Caco-2 (cell line): ENCODE measurements at regions of chr4 and their contacts with region 1.

Region 1: DNA sequence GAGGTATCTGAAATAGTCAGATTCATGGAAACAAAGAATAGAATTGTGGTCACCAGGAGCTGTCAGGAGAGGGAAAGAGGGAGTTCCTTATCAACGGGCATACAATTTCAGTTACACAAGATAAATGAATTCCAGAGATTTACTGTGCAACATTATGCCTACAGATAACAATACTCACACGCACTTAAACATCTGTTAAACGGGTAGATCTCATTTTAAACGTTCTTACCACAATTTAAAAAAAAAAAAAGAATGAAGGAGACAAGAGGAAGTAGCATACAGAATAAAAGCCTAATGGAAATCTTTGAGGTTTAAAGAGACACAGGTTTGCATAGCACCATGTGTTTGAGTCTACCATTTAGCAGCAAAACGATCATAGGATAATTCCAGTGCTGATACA is 298.0 kb downstream of the DKK2 start:
- DNase-seq: no peak
- H3K4me3 ChIP-seq: no peak overlapping the region
- H3K4me3 Mint-ChIP-seq: no peak overlapping the region
- H3K27ac Mint-ChIP-seq: no peak overlapping the region
- H3K4me1 ChIP-seq: peaks cover 24% of the 10 kb centered on the region
- H3K4me1 Mint-ChIP-seq: peaks cover 7% of the 10 kb centered on the region
- H3K27me3 ChIP-seq: no peaks in the 10 kb centered on the region
- H3K27me3 Mint-ChIP-seq: no peaks in the 10 kb centered on the region
- CTCF ChIP-seq: no peak

Region 2: DNA sequence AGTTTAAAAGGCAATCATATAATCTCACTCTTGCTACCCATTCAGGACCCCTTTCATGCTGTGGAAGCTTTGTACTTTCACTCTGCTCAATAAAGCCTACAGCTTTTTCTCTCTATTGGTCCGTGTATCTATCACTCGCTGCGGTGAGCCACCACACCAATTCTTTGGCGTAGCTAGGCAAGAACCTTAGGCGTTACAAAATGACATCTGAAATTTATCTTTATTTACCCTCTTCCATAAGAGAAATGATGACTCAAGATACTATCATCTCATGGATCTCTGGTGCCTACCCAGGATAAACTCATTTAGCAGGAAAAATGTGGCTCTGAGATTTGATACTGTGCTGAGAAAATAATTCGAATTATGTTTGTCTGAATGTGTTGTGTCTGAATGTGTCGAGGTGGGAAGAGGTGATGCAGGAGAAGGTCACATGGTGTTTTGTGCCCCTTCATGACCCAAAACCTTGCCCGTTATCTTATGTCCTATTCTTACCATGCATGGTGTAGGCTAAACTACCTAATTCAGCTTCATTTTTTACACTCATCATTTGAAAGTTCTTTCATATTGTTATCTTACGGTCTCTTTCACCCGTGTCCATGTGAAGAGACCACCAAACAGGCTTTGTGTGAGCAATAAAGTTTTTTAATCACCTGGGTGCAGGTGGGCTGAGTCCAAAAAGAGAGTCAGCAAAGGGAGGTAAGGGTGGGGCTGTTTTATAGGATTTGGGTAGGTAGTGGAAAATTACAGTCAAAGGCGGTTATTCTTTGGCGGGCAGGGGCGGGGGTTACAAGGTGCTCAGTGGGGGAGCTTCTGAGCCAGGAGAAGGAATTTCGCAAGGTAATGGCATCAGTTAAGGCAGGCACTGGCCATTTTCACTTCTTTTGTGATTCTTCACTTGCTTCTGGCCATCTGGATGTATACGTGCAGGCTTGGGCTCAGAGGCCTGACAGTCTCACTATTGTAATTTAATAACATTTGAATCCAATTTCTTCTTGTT is 327.9 kb before region 1 on chr4:
- CTCF ChIA-PET with region 1: no interaction called
- POLR2A ChIA-PET with region 1: no interaction called
- intact Hi-C with region 1: no loop called
- DNase-seq: no peak
- H3K4me3 ChIP-seq: no peak overlapping the region
- H3K4me3 Mint-ChIP-seq: no peak overlapping the region
- H3K27ac Mint-ChIP-seq: peak overlapping the region; percentile 54
- H3K4me1 ChIP-seq: peaks cover 57% of the 10 kb centered on the region
- H3K4me1 Mint-ChIP-seq: peaks cover 32% of the 10 kb centered on the region
- H3K27me3 ChIP-seq: no peaks in the 10 kb centered on the region
- H3K27me3 Mint-ChIP-seq: no peaks in the 10 kb centered on the region
- CTCF ChIP-seq: no peak

Region 3: GRCh38 chr4:106717091-106717490 is 21.0 kb before region 1 on chr4:
- CTCF ChIA-PET with region 1: no interaction called
- POLR2A ChIA-PET with region 1: no interaction called
- intact Hi-C with region 1: no loop called
- DNase-seq: no peak
- H3K4me3 ChIP-seq: no peak overlapping the region
- H3K4me3 Mint-ChIP-seq: no peak overlapping the region
- H3K27ac Mint-ChIP-seq: no peak overlapping the region
- H3K4me1 ChIP-seq: peaks cover 9% of the 10 kb centered on the region
- H3K4me1 Mint-ChIP-seq: peaks cover 8% of the 10 kb centered on the region
- H3K27me3 ChIP-seq: no peaks in the 10 kb centered on the region
- H3K27me3 Mint-ChIP-seq: no peaks in the 10 kb centered on the region
- CTCF ChIP-seq: no peak

Region 4: DNA sequence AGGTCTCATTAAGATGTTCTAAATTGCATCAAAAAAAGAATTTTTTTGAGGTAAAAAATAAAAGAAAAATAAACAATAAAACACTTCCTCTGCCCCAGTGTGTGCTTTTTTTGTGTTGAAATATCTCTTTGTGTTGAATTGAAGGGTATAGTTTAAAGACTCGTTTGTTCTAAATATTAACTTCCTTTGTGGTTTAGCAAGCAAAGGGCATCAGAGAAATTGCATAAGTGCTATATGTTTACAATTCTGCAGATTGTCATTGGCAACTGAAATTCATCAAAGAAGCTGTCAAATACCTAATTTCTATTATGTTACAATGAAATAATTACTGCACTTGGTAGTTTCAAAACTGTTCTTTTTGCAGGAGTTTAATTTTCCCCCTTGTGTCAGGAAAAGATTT is 37.5 kb after region 1 on chr4:
- CTCF ChIA-PET with region 1: no interaction called
- POLR2A ChIA-PET with region 1: no interaction called
- intact Hi-C with region 1: loop called (anchors 1 kb)
- DNase-seq: no peak
- H3K4me3 ChIP-seq: no peak overlapping the region
- H3K4me3 Mint-ChIP-seq: no peak overlapping the region
- H3K27ac Mint-ChIP-seq: no peak overlapping the region
- H3K4me1 ChIP-seq: peaks cover 7% of the 10 kb centered on the region; the same call in 1 of the 2 replicates
- H3K4me1 Mint-ChIP-seq: no peaks in the 10 kb centered on the region
- H3K27me3 ChIP-seq: no peaks in the 10 kb centered on the region
- H3K27me3 Mint-ChIP-seq: no peaks in the 10 kb centered on the region
- CTCF ChIP-seq: no peak